B cell (primary cell): ENCODE measurements at regions of chr1 and their contacts with region 1.

Region 1: DNA sequence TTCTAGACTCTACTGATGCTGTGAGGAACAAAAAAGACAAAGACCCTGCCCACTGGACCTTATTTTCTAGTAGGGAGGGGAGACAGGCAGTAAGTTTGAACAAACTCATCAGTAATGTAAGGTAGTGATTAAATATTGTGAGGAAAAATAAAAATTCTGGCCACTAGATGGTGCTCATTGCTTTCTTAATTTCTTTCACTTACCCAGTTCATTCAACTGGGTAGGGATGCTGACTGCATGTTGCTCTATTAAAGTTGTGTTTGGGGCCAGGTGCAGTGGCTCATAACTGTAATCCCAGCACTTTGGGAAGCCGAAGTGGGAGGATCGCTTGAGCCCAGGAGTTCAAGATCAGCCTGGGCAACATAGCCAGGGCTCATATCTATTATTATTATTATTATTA is 6.3 kb upstream of the KYAT3 start:
- DNase-seq: peak; percentile 82
- ATAC-seq: peak; percentile 93
- H3K4me3 ChIP-seq: no peak overlapping the region
- H3K4me3 Mint-ChIP-seq: no peak overlapping the region
- H3K27ac ChIP-seq: no peak overlapping the region
- H3K27ac Mint-ChIP-seq: no peak overlapping the region
- H3K4me1 ChIP-seq: peaks cover 2 to 3% of the 10 kb centered on the region in 2 donors
- H3K4me1 Mint-ChIP-seq: peaks cover 2% of the 10 kb centered on the region
- H3K27me3 ChIP-seq: no peaks in the 10 kb centered on the region
- H3K27me3 Mint-ChIP-seq: no peaks in the 10 kb centered on the region
- CTCF ChIP-seq: peak; percentile 75

Region 2: GRCh38 chr1:88973520-88974137 is 25.1 kb before region 1 on chr1:
- CTCF ChIA-PET with region 1: interaction called, 25 read pairs
- POLR2A ChIA-PET with region 1: no interaction called
- intact Hi-C with region 1: no loop called
- DNase-seq: peak; percentile 58
- ATAC-seq: peak; percentile 31
- H3K4me3 ChIP-seq: no peak overlapping the region
- H3K4me3 Mint-ChIP-seq: no peak overlapping the region
- H3K27ac ChIP-seq: no peak overlapping the region
- H3K27ac Mint-ChIP-seq: no peak overlapping the region
- H3K4me1 ChIP-seq: peaks cover 8 to 9% of the 10 kb centered on the region in 2 donors
- H3K4me1 Mint-ChIP-seq: peaks cover 19% of the 10 kb centered on the region
- H3K27me3 ChIP-seq: no peaks in the 10 kb centered on the region
- H3K27me3 Mint-ChIP-seq: no peaks in the 10 kb centered on the region
- CTCF ChIP-seq: peak; percentile 85

Region 3: GRCh38 chr1:89022167-89022959 is 23.6 kb after region 1 on chr1 and contains the start of gene GBP3:
- CTCF ChIA-PET with region 1: interaction called, 12 read pairs
- POLR2A ChIA-PET with region 1: interaction called, 8 read pairs
- intact Hi-C with region 1: no loop called
- DNase-seq: peak; percentile 65
- ATAC-seq: peak; percentile 68
- H3K4me3 ChIP-seq: peak within 1 kb of the TSS; percentile 62 to 87 (median 77)
- H3K4me3 Mint-ChIP-seq: peak within 1 kb of the TSS; percentile 90
- H3K27ac ChIP-seq: peak within 1 kb of the TSS; percentile 72 to 87
- H3K27ac Mint-ChIP-seq: peak within 1 kb of the TSS; percentile 89
- H3K4me1 ChIP-seq: peaks cover 13% of the 10 kb centered on the region in 2 donors
- H3K4me1 Mint-ChIP-seq: peaks cover 41% of the 10 kb centered on the region
- H3K27me3 ChIP-seq: no peaks in the 10 kb centered on the region
- H3K27me3 Mint-ChIP-seq: no peaks in the 10 kb centered on the region
- CTCF ChIP-seq: no peak
- total RNA-seq, gene GBP3: 16.4 and 20.8 TPM in 2 replicates

Region 4: DNA sequence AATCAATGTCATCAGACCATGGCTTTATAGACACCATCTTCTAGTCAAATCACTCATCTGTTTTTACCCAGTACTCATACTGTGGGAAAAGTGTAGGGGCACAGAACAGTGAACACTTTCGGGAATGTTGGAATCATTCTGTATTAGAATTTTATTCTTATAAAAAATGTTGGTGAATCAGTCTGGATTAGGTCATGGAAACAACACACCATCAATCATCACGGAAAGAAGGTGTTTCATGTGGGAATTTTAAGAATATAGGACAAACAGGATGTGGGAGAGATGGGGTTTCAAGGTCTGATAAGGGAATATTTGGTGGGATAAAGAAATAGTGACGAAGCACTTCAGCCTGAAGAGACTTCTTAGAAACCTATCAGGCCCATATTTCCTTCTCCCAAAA is 49.0 kb after region 1 on chr1:
- CTCF ChIA-PET with region 1: no interaction called
- POLR2A ChIA-PET with region 1: no interaction called
- intact Hi-C with region 1: no loop called
- DNase-seq: no peak
- ATAC-seq: no peak
- H3K4me3 ChIP-seq: no peak overlapping the region
- H3K4me3 Mint-ChIP-seq: no peak overlapping the region
- H3K27ac ChIP-seq: no peak overlapping the region
- H3K27ac Mint-ChIP-seq: no peak overlapping the region
- H3K4me1 ChIP-seq: no peaks in the 10 kb centered on the region
- H3K4me1 Mint-ChIP-seq: no peaks in the 10 kb centered on the region
- H3K27me3 ChIP-seq: no peaks in the 10 kb centered on the region
- H3K27me3 Mint-ChIP-seq: no peaks in the 10 kb centered on the region
- CTCF ChIP-seq: no peak

Region 5: GRCh38 chr1:89085781-89086180 is 87.1 kb after region 1 on chr1:
- CTCF ChIA-PET with region 1: interaction called, 7 read pairs
- POLR2A ChIA-PET with region 1: no interaction called
- intact Hi-C with region 1: loop called (anchors 5 kb)
- DNase-seq: peak; percentile 38
- ATAC-seq: peak; percentile 47
- H3K4me3 ChIP-seq: no peak overlapping the region
- H3K4me3 Mint-ChIP-seq: no peak overlapping the region
- H3K27ac ChIP-seq: no peak overlapping the region
- H3K27ac Mint-ChIP-seq: no peak overlapping the region
- H3K4me1 ChIP-seq: peaks cover 7 to 9% of the 10 kb centered on the region in 2 donors
- H3K4me1 Mint-ChIP-seq: peaks cover 4% of the 10 kb centered on the region
- H3K27me3 ChIP-seq: no peaks in the 10 kb centered on the region
- H3K27me3 Mint-ChIP-seq: no peaks in the 10 kb centered on the region
- CTCF ChIP-seq: peak; percentile 82

Region 6: GRCh38 chr1:89454845-89455521 is 456.3 kb after region 1 on chr1:
- CTCF ChIA-PET with region 1: interaction called, 62 read pairs
- POLR2A ChIA-PET with region 1: no interaction called
- intact Hi-C with region 1: loop called (anchors 1 kb)
- DNase-seq: peak; percentile 66
- ATAC-seq: peak; percentile 71
- H3K4me3 ChIP-seq: no peak overlapping the region
- H3K4me3 Mint-ChIP-seq: no peak overlapping the region
- H3K27ac ChIP-seq: no peak overlapping the region
- H3K27ac Mint-ChIP-seq: no peak overlapping the region
- H3K4me1 ChIP-seq: no peaks in the 10 kb centered on the region
- H3K4me1 Mint-ChIP-seq: peaks cover 2% of the 10 kb centered on the region
- H3K27me3 ChIP-seq: peaks cover 0 to 6% (median 5%) of the 10 kb centered on the region in 4 experiments
- H3K27me3 Mint-ChIP-seq: peaks cover 16% of the 10 kb centered on the region
- CTCF ChIP-seq: peak; percentile 81